ENCODE measurements at regions of chr3 and their contacts with region 1.

Region 1: GRCh38 chr3:15205934-15206661 is at the start of gene CAPN7:
- DNase-seq: peak; percentile 94
- H3K4me3 Mint-ChIP-seq: peak within 1 kb of the TSS; percentile 91
- H3K27ac Mint-ChIP-seq: peak within 1 kb of the TSS; percentile 86
- H3K4me1 Mint-ChIP-seq: peaks cover 27% of the 10 kb centered on the region
- H3K27me3 Mint-ChIP-seq: peaks cover 1% of the 10 kb centered on the region
- total RNA-seq, gene CAPN7: 26.0 and 28.6 TPM in 2 replicates

Region 2: GRCh38 chr3:14178247-14179113 is 1027.6 kb before region 1 on chr3 and contains the starts of genes LSM3 and XPC:
- intact Hi-C with region 1: loop called (anchors 2 kb)
- DNase-seq: peak; percentile 98
- H3K4me3 Mint-ChIP-seq: peak within 1 kb of the TSS; percentile 94
- H3K27ac Mint-ChIP-seq: peak within 1 kb of the TSS; percentile 99
- H3K4me1 Mint-ChIP-seq: peaks cover 64% of the 10 kb centered on the region
- H3K27me3 Mint-ChIP-seq: no peaks in the 10 kb centered on the region
- total RNA-seq, gene LSM3: 15.6 and 15.8 TPM in 2 replicates
- total RNA-seq, gene XPC: 34.1 and 35.9 TPM in 2 replicates

Region 3: GRCh38 chr3:15064835-15065549 is 141.1 kb before region 1 on chr3 and contains the start of gene MRPS25:
- intact Hi-C with region 1: loop called (anchors 2 kb)
- DNase-seq: peak; percentile 90
- H3K4me3 Mint-ChIP-seq: peak within 1 kb of the TSS; percentile 96
- H3K27ac Mint-ChIP-seq: peak within 1 kb of the TSS; percentile 95
- H3K4me1 Mint-ChIP-seq: peaks cover 20% of the 10 kb centered on the region
- H3K27me3 Mint-ChIP-seq: no peaks in the 10 kb centered on the region
- total RNA-seq, gene MRPS25: 96.5 and 105 TPM in 2 replicates

Region 4: DNA sequence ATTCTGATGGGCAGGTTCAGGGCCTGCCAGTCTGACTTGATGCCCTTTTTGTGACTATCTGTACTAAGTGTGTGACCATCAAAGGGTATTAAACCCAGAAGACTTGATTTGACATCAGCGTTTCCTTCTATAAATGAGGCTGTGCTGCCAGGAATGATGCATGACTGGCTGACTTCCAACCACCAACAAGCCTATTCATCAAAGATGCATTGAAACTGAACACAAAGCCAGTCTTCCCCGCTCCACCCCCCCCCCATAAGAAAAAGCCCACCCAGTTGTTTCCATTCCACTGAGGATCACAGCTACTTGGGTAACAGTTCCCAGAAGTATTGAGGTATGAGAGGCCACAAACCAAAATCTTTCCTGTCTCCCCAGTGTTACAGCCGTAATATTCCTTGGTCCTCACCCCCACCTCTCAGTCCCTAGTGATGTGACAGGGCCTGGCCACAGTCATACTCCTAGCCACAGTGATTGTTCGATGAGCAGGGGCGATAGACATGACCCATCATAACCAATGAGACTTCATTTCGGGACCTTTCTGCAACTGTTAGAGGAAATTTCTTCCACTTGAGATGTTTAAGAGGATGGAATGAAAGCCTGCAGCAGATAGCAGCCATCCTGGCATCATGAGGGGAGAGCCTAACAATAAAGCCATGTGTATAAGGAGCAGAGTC is 103.7 kb after region 1 on chr3:
- intact Hi-C with region 1: loop called (anchors 2 kb)
- DNase-seq: no peak
- H3K4me3 Mint-ChIP-seq: peak overlapping the region; percentile 66
- H3K27ac Mint-ChIP-seq: peak overlapping the region; percentile 94
- H3K4me1 Mint-ChIP-seq: peaks cover 66% of the 10 kb centered on the region
- H3K27me3 Mint-ChIP-seq: no peaks in the 10 kb centered on the region

Region 5: GRCh38 chr3:15427182-15427880 is 221.2 kb after region 1 on chr3 and contains the starts of genes EAF1 and METTL6:
- intact Hi-C with region 1: loop called (anchors 1 kb)
- DNase-seq: peak; percentile 81
- H3K4me3 Mint-ChIP-seq: peak within 1 kb of the TSS; percentile 97
- H3K27ac Mint-ChIP-seq: peak within 1 kb of the TSS; percentile 96
- H3K4me1 Mint-ChIP-seq: peaks cover 61% of the 10 kb centered on the region
- H3K27me3 Mint-ChIP-seq: no peaks in the 10 kb centered on the region
- total RNA-seq, gene EAF1: 27.3 and 27.8 TPM in 2 replicates
- total RNA-seq, gene METTL6: 15.0 and 15.8 TPM in 2 replicates

Region 6: DNA sequence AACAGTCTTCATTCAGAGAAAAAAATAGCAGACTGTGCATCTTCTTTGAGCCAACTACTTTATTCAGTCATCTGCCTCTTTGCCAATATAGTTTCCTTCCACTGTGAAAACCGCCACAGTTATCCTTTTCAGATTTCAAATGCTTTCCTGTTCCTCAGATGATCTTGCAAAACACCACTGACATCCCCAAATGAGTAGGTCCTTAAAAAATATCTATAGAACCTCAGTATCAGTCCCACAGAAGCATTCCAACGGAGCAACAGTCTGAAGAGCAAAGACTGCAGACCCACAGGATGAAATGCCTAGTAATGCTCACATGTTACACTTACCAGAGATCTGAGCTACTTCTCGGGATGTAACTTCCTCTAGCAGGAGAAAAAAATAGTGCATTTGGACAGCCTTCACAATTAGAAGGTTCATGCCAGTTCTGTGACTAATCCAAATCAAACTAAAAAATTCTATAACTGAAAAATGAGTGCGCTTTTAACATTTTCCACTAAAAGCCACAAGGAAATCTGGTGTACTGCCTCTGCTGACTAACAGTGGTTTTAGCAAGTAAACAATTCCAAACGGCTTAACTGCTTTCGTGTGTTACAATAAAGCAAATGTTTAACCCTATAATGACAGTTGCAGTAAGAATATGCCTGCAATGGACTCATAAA is 591.7 kb after region 1 on chr3 and contains the start of gene ANKRD28:
- intact Hi-C with region 1: loop called (anchors 5 kb)
- DNase-seq: peak; percentile 27
- H3K4me3 Mint-ChIP-seq: peak within 1 kb of the TSS; percentile 88
- H3K27ac Mint-ChIP-seq: peak within 1 kb of the TSS; percentile 99
- H3K4me1 Mint-ChIP-seq: peaks cover 92% of the 10 kb centered on the region
- H3K27me3 Mint-ChIP-seq: no peaks in the 10 kb centered on the region
- total RNA-seq, gene ANKRD28: 39.6 and 42.9 TPM in 2 replicates

Region 7: GRCh38 chr3:16247276-16248061 is 1041.4 kb after region 1 on chr3:
- intact Hi-C with region 1: loop called (anchors 1 kb)
- DNase-seq: peak; percentile 70
- H3K4me3 Mint-ChIP-seq: no peak overlapping the region
- H3K27ac Mint-ChIP-seq: no peak overlapping the region
- H3K4me1 Mint-ChIP-seq: peaks cover 32% of the 10 kb centered on the region
- H3K27me3 Mint-ChIP-seq: peaks cover 2% of the 10 kb centered on the region

Region 8: DNA sequence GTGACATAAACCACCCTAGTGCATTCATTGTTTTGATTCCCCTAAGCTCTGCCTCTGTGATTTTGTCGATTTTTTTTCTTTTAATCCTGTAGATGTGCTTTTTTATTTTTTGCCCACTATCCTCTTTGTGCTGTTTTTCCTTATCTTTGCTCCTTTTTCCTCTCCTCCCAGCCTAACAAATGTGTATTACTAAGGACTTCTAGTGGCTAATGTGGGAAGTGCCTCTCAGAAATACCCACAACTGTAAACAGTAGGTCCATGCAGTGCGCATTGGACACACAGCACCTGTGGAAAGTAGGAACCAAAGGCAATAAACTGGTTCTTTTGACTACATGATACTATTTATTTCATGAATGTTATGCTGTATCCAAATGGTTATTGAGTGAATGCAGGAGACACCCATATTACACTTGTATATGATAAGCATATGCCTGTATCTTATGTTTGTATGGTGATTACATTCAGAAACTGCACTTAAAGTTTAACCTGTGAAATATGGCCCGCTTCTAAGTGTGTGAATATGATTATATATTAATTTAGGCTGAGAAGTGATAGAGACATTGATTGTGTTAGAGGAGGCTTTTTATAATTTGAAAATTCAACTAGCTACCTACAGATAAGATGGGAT is 1826.4 kb after region 1 on chr3:
- intact Hi-C with region 1: no loop called
- DNase-seq: no peak
- H3K4me3 Mint-ChIP-seq: no peak overlapping the region
- H3K27ac Mint-ChIP-seq: peak overlapping the region; percentile 2
- H3K4me1 Mint-ChIP-seq: peaks cover 64% of the 10 kb centered on the region
- H3K27me3 Mint-ChIP-seq: peaks cover 1% of the 10 kb centered on the region

Measured in activated T-helper 1 cell treated with anti-CD3 and anti-CD28 coated beads, Interleukin-12 subunit alpha, Interleukin-12 subunit beta, Interleukin-2, Interleukin-4 antibody, amounts not matched to agents 30 ng/mL and 10 ng/mL and 1 ng/mL, durations not matched to agents 14 hours and 24 hours and 36 hours (primary cell).